Prostate gland (tissue), 2 donors: ENCODE measurements at regions of chr3 and their contacts with region 1.

Region 1: DNA sequence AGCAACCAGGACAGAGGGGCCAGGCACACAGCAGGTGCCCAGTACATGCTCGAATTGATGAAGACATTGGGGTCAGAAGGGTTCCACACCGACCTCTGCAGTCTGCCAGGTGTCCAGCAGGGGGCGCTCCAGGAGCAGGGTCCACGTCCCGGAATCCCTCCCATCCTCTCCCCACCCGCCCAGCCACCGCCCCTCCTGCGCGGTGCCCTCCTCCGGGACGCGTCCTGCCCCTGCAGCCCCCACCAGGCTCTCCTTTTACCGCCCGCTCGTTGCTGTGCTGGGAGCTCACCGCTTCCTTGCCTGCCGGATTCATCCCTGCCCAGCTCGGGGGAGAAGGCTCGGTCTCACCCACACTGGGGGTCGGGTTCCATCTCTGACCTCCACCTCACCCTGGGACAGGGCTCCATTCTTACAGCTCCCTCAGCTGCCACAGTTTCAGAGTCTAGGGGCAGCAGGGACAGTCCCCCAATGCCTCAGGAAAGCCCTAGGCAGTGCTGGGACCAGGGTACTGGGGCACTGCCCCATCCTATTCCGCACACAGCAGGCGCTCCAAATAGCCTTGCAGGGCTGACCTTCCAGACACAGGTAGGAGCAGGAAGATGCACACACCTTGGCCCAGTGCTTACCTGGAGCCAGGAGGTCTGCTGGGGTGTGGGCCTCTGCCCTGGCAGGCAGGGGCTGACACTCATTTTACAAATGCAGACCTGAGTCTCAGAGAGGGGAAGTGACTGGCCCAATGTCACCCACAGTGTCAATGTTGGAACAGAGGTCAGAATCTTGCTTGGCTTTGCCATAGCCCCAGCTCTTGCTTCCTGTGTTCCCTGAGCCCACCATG is 31.0 kb downstream of the GRIP2 start:
- DNase-seq: peak; percentile 33
- H3K4me3 ChIP-seq: no peak overlapping the region
- H3K27ac ChIP-seq: no peak overlapping the region
- H3K4me1 ChIP-seq: no peaks in the 10 kb centered on the region
- H3K27me3 ChIP-seq: no peaks in the 10 kb centered on the region
- CTCF ChIP-seq: peak; percentile 76 to 98 (median 86)
- POLR2A ChIP-seq: no peak

Region 2: GRCh38 chr3:14547693-14548092 is 38.5 kb after region 1 on chr3:
- intact Hi-C with region 1: loop called (anchors 2 kb)
- DNase-seq: no peak
- H3K4me3 ChIP-seq: no peak overlapping the region
- H3K27ac ChIP-seq: no peak overlapping the region
- H3K4me1 ChIP-seq: no peaks in the 10 kb centered on the region
- H3K27me3 ChIP-seq: no peaks in the 10 kb centered on the region
- CTCF ChIP-seq: no peak
- POLR2A ChIP-seq: no peak

Region 3: DNA sequence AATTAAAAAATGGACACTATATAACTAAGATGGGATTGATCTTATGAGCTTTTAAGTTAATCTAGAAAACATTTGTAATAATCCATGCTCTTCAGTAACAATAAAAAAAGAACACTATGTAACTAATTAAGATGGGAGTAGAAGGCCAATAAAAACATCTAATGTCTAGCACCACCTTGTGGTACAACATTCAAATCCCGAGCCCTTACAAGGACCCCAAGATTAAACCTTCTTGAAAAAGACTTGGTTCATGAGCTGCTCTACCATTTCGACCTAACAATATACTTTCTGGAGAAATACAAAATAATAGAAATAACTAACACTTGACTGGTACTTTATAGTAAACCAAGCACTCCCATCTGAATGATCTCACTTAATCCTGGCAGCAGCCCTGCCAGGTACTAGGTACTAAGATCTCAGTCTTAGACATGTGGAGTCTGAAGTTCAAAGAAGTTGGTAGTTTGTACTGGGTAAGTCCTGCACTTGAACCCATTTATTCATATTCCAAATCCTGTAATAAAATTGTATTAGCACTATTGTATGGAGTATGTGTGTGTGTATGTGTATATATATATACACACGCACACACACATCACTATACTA is 896.4 kb after region 1 on chr3:
- intact Hi-C with region 1: no loop called
- DNase-seq: peak; percentile 18
- H3K4me3 ChIP-seq: no peak overlapping the region
- H3K27ac ChIP-seq: no peak overlapping the region
- H3K4me1 ChIP-seq: no peaks in the 10 kb centered on the region
- H3K27me3 ChIP-seq: no peaks in the 10 kb centered on the region
- CTCF ChIP-seq: peak in 3 of 4 experiments; percentile 53 to 60 (median 58)
- POLR2A ChIP-seq: no peak